Activated naive CD4-positive, alpha-beta T cell treated with anti-CD3 and anti-CD28 coated beads for 36 hours (primary cell): ENCODE measurements at regions of chr4 and their contacts with region 1.

Region 1: DNA sequence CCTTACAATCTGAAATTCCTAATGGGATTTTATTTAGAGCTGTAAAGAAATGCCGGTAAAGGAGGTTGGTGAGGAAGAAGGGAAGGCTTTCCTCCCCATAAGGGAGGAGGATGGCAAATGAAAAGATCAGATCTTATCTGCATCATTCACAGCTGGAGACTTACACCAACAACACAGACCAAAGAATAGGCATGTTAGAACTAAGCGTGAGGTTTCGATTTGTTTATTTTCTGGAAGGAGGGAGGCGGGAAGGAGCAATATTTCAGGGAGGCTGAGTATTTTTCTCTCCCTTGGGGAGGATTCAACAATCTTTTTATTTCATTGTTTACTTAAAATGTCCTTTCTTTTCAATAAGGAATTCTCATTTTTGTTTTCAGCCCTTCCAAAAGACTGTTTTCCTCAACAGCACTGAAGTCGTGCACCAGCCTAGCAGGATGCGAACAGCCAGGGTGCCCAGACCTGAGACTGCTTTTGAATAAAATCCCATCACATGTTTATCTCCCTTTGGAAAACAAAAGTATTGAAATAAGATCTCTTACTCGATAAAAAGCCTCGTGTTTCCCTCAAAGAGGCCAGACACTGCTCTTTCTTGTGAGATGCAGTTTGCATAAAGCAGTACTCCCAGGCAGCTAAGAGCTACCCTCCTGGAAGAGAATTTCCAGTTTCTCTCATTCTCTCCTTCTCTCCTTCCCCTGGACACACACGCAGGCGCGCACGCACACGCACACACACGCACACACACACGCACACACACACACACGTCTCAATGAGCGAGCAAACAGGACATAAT is 236.1 kb downstream of the MGST2 start:
- DNase-seq: no peak
- H3K4me3 Mint-ChIP-seq: no peak overlapping the region
- H3K27ac Mint-ChIP-seq: no peak overlapping the region
- H3K4me1 Mint-ChIP-seq: peaks cover 14% of the 10 kb centered on the region
- H3K27me3 Mint-ChIP-seq: peaks cover 2% of the 10 kb centered on the region

Region 2: DNA sequence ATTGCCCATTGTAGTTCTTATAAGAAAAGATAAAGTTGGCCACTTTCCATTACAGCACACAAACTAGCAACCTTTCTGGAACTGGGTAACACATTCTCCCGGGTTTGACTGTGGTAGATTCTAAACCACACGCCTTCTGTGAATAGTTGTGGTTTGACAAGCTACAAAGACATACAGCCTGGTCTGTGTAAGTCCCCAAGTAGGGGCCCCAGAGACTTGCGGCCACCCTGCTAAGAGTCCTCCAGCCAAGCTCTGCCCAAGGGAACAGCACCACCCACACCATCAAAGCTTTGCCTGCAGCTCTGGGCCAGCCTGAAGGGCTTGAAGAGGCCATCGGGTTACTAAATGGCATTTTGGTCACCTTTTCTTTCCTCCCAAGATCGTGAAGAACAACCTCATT is 48.8 kb after region 1 on chr4:
- CTCF ChIA-PET with region 1: no interaction called
- intact Hi-C with region 1: loop called (anchors 1 kb)
- DNase-seq: peak; percentile 60
- H3K4me3 Mint-ChIP-seq: no peak overlapping the region
- H3K27ac Mint-ChIP-seq: peak overlapping the region; percentile 48
- H3K4me1 Mint-ChIP-seq: peaks cover 25% of the 10 kb centered on the region
- H3K27me3 Mint-ChIP-seq: no peaks in the 10 kb centered on the region

Region 3: GRCh38 chr4:139978692-139979091 is 77.0 kb after region 1 on chr4:
- CTCF ChIA-PET with region 1: no interaction called
- intact Hi-C with region 1: loop called (anchors 5 kb)
- DNase-seq: peak; percentile 45
- H3K4me3 Mint-ChIP-seq: no peak overlapping the region
- H3K27ac Mint-ChIP-seq: no peak overlapping the region
- H3K4me1 Mint-ChIP-seq: peaks cover 22% of the 10 kb centered on the region
- H3K27me3 Mint-ChIP-seq: no peaks in the 10 kb centered on the region